ENCODE measurements at regions of chr6 and their contacts with region 1.

Region 1: DNA sequence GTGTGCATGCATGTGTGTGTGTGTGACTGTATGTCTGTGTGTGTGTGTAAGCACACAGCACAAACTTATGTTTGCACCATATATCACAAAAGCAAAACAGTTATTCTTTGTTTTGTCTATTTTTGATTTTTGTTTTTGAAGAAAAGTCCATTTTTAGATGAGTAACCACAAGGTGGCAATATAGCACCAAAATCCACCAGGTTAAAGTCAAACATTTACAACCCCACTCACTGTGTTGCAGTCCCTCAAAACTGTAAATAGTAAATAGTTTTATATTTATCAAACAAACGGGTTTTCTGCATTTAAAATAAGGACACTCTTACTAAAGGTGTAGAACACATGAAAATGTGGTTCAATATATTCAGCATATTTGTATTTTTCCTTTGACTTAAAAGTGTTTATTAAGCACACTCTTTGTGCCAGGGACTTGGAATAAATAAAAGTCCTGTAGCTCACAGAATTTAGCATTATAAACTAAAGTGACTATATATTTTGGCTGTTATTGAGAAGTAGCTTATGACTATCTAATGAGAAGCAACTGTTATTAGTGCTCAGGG is 118.5 kb downstream of the GFRAL start:
- DNase-seq: no peak
- H3K4me3 ChIP-seq: no peak overlapping the region
- H3K27ac ChIP-seq: no peak overlapping the region
- H3K27me3 ChIP-seq: no peaks in the 10 kb centered on the region
- CTCF ChIP-seq: peak; percentile 57

Region 2: GRCh38 chr6:55433446-55434130 is 12.1 kb before region 1 on chr6:
- CTCF ChIA-PET with region 1: interaction called, 11 read pairs
- POLR2A ChIA-PET with region 1: no interaction called
- DNase-seq: no peak
- H3K4me3 ChIP-seq: no peak overlapping the region
- H3K27ac ChIP-seq: no peak overlapping the region
- H3K27me3 ChIP-seq: no peaks in the 10 kb centered on the region
- CTCF ChIP-seq: no peak

Region 3: DNA sequence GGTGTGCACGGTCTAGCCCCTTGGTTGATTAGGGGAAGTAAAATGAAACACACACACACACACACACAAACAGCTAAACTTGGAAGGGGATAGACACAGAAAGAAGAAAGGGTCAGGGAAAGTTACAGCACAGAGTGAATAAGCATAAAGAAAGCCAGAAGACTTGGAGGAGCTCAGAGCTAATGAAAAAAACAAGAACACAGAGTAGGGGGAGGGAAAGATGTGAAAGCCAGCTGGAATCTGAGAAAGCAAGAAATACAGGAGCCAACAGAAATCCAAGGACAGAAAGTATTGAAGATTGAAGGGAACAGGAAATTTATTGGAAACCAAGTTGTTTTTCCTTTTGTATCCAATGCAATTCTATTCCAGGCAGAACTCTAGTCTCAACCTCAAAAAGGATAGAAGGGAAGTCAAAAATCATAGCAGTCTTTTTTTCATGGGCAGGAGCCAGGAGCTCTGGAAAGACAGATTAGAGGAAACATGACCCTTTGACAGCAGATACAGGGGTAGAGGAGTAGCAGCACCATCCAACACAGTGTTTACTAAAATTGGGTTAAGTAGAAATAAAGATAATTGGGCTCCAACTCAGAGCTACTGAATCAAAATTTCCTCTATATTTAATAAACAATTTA is 123.2 kb after region 1 on chr6:
- CTCF ChIA-PET with region 1: no interaction called
- POLR2A ChIA-PET with region 1: no interaction called
- DNase-seq: no peak
- H3K4me3 ChIP-seq: no peak overlapping the region
- H3K27ac ChIP-seq: no peak overlapping the region
- H3K27me3 ChIP-seq: no peaks in the 10 kb centered on the region
- CTCF ChIP-seq: no peak

Region 4: DNA sequence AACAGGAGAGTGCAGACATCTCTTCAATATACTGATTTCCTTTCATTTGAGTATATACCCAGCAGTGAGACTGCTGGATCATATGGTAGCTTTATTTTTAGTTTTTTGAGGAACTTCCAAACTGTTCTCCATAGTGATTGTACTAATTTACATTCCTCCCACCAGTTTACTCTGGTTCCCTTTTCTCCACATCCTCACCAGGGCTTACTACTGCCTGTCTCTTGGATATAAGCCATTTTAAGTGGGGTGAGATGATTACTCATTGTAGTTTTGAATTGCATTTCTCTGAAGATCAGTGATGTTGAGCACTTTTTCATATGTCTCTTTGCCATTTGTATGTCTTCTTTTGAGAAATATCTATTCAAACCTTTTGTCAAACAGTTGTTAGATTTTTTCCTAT is 198.1 kb after region 1 on chr6:
- CTCF ChIA-PET with region 1: no interaction called
- POLR2A ChIA-PET with region 1: no interaction called
- DNase-seq: no peak
- H3K4me3 ChIP-seq: no peak overlapping the region
- H3K27ac ChIP-seq: no peak overlapping the region
- H3K27me3 ChIP-seq: no peaks in the 10 kb centered on the region
- CTCF ChIP-seq: no peak

Region 5: DNA sequence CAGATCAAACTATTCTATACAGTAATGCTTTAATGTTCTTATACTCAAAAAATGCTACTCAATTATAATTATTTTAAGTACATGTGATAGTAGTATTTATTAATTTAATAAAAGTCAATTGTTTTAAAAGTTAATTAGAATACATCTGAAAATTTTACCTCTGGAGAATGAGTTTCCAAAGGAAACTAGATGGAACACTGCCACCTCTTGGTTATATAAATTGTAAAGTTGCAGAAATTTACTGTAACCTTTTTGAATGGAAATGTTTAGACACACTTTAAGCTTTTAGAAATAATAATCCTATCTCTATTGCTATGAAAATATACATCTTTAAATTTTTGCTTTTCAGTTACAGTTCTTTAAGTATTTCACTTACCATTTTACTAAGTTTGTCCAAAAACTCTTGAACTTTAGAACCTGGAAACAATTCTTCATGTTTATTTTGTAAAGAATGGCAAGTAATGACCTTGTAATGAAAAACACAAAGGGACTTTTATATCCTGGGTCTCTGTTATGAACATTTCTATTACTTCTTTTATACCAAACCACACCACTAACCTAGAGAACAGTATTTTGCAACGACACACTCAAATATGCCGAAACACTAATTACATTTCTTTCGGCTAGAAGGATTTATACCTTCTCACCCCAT is 440.6 kb after region 1 on chr6:
- CTCF ChIA-PET with region 1: interaction called, 45 read pairs
- POLR2A ChIA-PET with region 1: no interaction called
- DNase-seq: no peak
- H3K4me3 ChIP-seq: no peak overlapping the region
- H3K27ac ChIP-seq: no peak overlapping the region
- H3K27me3 ChIP-seq: no peaks in the 10 kb centered on the region
- CTCF ChIP-seq: peak; percentile 50

Region 6: GRCh38 chr6:55941702-55942101 is 496.0 kb after region 1 on chr6:
- CTCF ChIA-PET with region 1: interaction called, 117 read pairs
- POLR2A ChIA-PET with region 1: no interaction called
- DNase-seq: no peak
- H3K4me3 ChIP-seq: no peak overlapping the region
- H3K27ac ChIP-seq: no peak overlapping the region
- H3K27me3 ChIP-seq: no peaks in the 10 kb centered on the region
- CTCF ChIP-seq: peak; percentile 56

Region 7: DNA sequence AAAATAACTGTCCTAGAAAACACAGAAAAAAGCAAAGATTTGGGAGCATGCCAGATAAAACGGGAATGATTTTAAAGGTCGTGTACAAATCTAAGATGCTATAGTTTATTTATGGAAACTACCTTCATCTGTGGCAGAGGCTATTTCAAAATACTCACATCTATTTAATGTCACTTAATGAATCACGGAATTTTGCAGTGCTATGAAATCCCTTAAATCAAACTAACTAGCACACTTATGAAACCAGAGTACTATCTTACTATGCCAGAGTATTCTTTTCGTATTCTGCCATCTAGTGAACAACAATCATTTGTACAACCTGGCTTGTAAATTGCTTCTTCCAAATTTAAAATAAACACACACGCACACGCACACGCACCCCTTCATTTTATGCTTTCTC is 507.6 kb after region 1 on chr6:
- CTCF ChIA-PET with region 1: interaction called, 128 read pairs
- POLR2A ChIA-PET with region 1: no interaction called
- DNase-seq: peak; percentile 33
- H3K4me3 ChIP-seq: peak overlapping the region; percentile 34
- H3K27ac ChIP-seq: no peak overlapping the region
- H3K27me3 ChIP-seq: no peaks in the 10 kb centered on the region
- CTCF ChIP-seq: peak; percentile 62

Region 8: GRCh38 chr6:56292505-56293181 is 846.9 kb after region 1 on chr6:
- CTCF ChIA-PET with region 1: interaction called, 30 read pairs
- POLR2A ChIA-PET with region 1: no interaction called
- DNase-seq: peak; percentile 41
- H3K4me3 ChIP-seq: no peak overlapping the region
- H3K27ac ChIP-seq: no peak overlapping the region
- H3K27me3 ChIP-seq: no peaks in the 10 kb centered on the region
- CTCF ChIP-seq: peak; percentile 70